ENCODE measurements at regions of chr20 and their contacts with region 1.

Region 1: GRCh38 chr20:3889489-3890397 is 556 bp downstream of the PANK2 start:
- DNase-seq: peak; percentile 59
- ATAC-seq: peak; percentile 14

Region 2: GRCh38 chr20:3932681-3933080 is 42.9 kb after region 1 on chr20:
- intact Hi-C with region 1: loop called (anchors 5 kb)
- DNase-seq: no peak
- ATAC-seq: no peak

Region 3: DNA sequence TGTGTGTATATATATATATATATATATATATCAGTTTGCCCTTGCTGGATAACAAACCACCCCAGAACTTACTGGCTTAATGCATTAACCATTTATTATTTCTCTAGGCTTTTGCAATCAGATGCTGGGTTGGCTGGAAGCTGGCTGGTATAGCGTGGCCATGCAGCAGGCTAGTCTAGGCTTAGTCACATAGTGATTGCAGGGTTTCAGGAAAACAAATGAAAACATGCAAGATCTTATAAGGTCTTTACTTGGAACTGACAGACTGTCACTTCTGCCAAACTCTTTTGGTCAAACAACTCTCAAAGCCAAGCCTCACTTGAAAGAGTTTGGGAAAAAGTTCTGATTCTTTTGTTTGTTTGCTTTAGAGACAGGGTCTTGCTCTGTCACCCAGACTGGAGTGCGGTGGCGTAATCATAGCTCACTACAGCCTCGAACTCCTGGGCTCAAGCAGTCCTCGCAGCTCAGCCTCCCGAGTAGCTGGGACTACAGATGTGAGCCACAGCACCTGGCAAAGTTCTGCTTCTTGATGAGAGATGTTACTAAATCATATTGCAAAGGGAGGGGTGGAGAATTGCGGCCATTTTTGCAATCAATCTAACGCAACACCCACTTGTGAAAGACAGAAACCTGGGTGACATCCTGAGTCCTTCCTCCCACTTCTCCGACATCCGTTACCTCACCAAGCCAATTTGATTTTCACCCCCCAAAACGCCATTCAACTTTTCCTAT is 200.2 kb after region 1 on chr20:
- intact Hi-C with region 1: loop called (anchors 5 kb)
- DNase-seq: no peak
- ATAC-seq: no peak

Measured in Right ventricle myocardium superior (tissue), 1 donor.